Naive thymus-derived CD4-positive, alpha-beta T cell (primary cell): ENCODE measurements at regions of chr12 and their contacts with region 1.

Region 1: DNA sequence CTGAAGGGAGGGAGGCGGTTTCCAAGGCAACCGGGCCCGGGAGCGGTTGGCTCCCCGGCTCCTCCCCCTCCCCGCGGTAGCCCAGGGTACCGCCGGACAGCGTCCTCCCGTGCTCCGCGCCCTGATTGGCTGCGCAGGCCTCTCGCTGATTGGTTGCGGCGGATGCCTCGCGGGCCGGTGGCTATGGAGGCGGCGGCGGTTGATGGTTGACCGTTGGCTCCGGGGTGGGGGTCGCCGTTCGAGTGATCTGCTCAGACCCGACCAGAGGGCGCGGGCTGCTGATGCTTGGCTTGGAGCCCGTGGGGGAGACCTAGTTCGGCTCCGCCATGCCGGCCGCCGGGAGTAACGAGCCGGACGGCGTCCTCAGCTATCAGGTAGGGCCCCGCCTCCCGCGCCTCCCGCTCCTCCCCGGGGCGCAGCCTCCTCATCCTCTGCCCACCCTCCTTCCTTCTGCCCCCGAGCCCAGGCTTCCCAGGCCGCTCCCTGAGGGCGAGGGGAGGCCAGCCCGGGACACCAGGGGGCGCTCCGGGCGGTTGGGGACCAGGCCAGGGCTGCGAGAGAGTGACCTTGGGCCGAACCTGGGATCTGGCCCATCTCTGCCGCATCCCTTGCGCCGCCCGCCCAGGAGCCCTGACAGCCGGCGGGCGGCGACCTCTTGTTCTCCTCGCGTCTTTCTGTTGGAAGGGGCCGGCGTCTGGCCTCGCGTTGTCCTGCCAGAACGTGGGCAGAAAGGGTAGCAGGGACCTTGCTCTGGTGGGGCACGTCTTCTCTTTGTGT is at the start of gene SLC4A8:
- DNase-seq: peak; percentile 22 to 83 (median 51)
- ATAC-seq: peak; percentile 91
- H3K4me3 ChIP-seq: peak within 1 kb of the TSS; percentile 56
- H3K4me3 Mint-ChIP-seq: peak within 1 kb of the TSS; percentile 75 to 90 (median 82)
- H3K27ac ChIP-seq: no peak within 1 kb of the TSS
- H3K27ac Mint-ChIP-seq: peak within 1 kb of the TSS in 8 of 9 donors; percentile 2 to 90 (median 48)
- H3K4me1 ChIP-seq: peaks cover 5% of the 10 kb centered on the region in 2 donors
- H3K4me1 Mint-ChIP-seq: peaks cover 12 to 33% (median 13%) of the 10 kb centered on the region in 7 donors
- H3K27me3 ChIP-seq: no peaks in the 10 kb centered on the region
- H3K27me3 Mint-ChIP-seq: peaks cover 0 to 13% (median 0%) of the 10 kb centered on the region in 5 donors
- total RNA-seq, gene SLC4A8: 0.97 to 8.4 (median 3.4) TPM

Region 2: DNA sequence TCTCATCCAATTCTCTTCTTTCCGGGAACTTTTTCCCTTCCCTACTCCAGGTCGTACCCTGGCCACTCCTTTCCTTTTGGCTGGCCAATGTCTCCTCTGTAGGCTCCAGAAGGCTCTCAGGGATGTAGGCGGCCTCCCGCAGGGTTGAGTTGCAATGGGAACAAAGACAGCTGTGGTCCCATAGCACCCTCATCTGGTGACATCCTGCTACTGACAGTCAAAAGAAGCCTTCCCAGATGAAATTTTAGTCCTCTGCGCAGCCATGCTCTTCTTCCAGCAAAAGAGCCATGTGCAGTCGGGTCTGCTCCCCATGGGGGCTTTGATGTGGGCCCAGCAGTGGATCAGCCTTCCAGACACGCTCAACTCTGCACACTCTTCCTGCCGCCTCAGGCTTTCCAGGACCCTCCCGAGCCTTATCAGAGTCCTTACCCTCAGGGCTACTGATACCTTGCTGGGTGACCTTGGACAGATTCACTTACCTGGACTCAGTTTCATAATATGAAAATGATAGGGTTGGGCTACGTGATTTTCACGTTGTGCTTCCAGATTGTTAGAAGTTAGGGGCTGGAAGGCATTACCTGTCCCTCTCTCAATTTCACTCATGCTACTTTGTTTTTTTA is 72.8 kb before region 1 on chr12:
- CTCF ChIA-PET with region 1: no interaction called
- POLR2A ChIA-PET with region 1: no interaction called
- intact Hi-C with region 1: no loop called
- DNase-seq: peak; percentile 8 to 64 (median 39)
- ATAC-seq: peak; percentile 89
- H3K4me3 ChIP-seq: no peak overlapping the region
- H3K4me3 Mint-ChIP-seq: no peak overlapping the region
- H3K27ac ChIP-seq: no peak overlapping the region
- H3K27ac Mint-ChIP-seq: peak overlapping the region in 4 of 9 donors; percentile 7 to 65 (median 22)
- H3K4me1 ChIP-seq: no peaks in the 10 kb centered on the region
- H3K4me1 Mint-ChIP-seq: peaks cover 0 to 10% (median 5%) of the 10 kb centered on the region in 7 donors
- H3K27me3 ChIP-seq: no peaks in the 10 kb centered on the region
- H3K27me3 Mint-ChIP-seq: peaks cover 0 to 4% (median 0%) of the 10 kb centered on the region in 5 donors

Region 3: GRCh38 chr12:51368640-51369517 is 56.0 kb before region 1 on chr12:
- CTCF ChIA-PET with region 1: no interaction called
- POLR2A ChIA-PET with region 1: no interaction called
- intact Hi-C with region 1: loop called in 1 of 2 experiments (anchors 2 kb)
- DNase-seq: peak; percentile 53 to 96 (median 95)
- ATAC-seq: peak; percentile 96
- H3K4me3 ChIP-seq: peak overlapping the region; percentile 57
- H3K4me3 Mint-ChIP-seq: peak overlapping the region; percentile 62 to 89 (median 80)
- H3K27ac ChIP-seq: peak overlapping the region; percentile 73
- H3K27ac Mint-ChIP-seq: peak overlapping the region; percentile 6 to 96 (median 91)
- H3K4me1 ChIP-seq: peaks cover 24 to 35% of the 10 kb centered on the region in 2 donors
- H3K4me1 Mint-ChIP-seq: peaks cover 38 to 72% (median 54%) of the 10 kb centered on the region in 7 donors
- H3K27me3 ChIP-seq: no peaks in the 10 kb centered on the region
- H3K27me3 Mint-ChIP-seq: peaks cover 0 to 5% (median 0%) of the 10 kb centered on the region in 5 donors

Region 4: GRCh38 chr12:51403681-51404136 is 21.1 kb before region 1 on chr12:
- CTCF ChIA-PET with region 1: no interaction called
- POLR2A ChIA-PET with region 1: no interaction called
- intact Hi-C with region 1: no loop called
- DNase-seq: no peak
- ATAC-seq: peak; percentile 92
- H3K4me3 ChIP-seq: no peak overlapping the region
- H3K4me3 Mint-ChIP-seq: no peak overlapping the region
- H3K27ac ChIP-seq: no peak overlapping the region
- H3K27ac Mint-ChIP-seq: no peak overlapping the region
- H3K4me1 ChIP-seq: peaks cover 0 to 3% of the 10 kb centered on the region in 2 donors
- H3K4me1 Mint-ChIP-seq: peaks cover 3 to 13% (median 7%) of the 10 kb centered on the region in 7 donors
- H3K27me3 ChIP-seq: no peaks in the 10 kb centered on the region
- H3K27me3 Mint-ChIP-seq: peaks cover 0 to 18% (median 0%) of the 10 kb centered on the region in 5 donors

Region 5: DNA sequence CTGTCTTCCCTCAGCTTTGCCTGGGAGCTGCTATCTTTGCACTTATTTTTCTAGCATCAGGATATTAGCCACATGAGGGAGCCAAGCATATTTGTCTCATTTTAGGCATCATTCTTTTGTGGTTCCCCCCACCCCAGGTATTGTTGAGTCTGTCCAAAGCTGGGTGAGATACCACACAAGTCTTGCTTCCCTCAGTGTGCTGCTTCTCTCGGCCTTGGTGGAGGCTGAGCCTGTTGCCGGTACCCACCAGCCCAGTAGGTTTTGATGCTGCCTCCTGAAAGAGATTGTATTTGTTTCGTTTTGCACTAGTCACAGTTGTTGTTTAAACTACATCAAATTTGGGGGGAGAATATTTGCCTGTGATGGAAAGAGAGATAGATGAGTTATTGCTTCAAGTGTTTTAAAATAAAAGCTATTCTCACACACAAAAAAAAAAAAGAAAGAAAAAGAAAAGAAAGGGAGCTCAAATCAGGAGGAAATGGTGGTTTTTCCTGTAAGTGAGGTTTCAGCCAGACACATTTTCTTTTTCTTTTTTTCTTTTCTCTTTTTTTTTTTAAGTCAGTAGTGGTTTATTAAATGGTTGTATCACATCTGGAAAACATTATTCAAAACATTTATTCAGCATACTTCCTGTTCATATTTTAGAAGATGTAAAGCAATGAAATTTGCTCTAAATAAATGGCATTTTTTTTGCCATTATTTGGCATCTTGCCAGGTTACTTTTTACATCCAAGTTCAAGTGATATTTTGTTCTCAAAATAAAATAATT is 58.3 kb after region 1 on chr12:
- CTCF ChIA-PET with region 1: no interaction called
- POLR2A ChIA-PET with region 1: no interaction called
- intact Hi-C with region 1: loop called in 1 of 2 experiments (anchors 1 kb)
- DNase-seq: peak in 8 of 9 donors; percentile 30 to 67 (median 50)
- ATAC-seq: peak; percentile 54
- H3K4me3 ChIP-seq: peak overlapping the region; percentile 28
- H3K4me3 Mint-ChIP-seq: peak overlapping the region; percentile 31 to 88 (median 76)
- H3K27ac ChIP-seq: peak overlapping the region; percentile 42
- H3K27ac Mint-ChIP-seq: peak overlapping the region; percentile 79 to 97 (median 90)
- H3K4me1 ChIP-seq: peaks cover 19 to 32% of the 10 kb centered on the region in 2 donors
- H3K4me1 Mint-ChIP-seq: peaks cover 17 to 54% (median 53%) of the 10 kb centered on the region in 7 donors
- H3K27me3 ChIP-seq: no peaks in the 10 kb centered on the region
- H3K27me3 Mint-ChIP-seq: no peaks in the 10 kb centered on the region

Region 6: GRCh38 chr12:51590347-51591019 is 165.6 kb after region 1 on chr12:
- CTCF ChIA-PET with region 1: no interaction called
- POLR2A ChIA-PET with region 1: no interaction called
- intact Hi-C with region 1: loop called in 1 of 2 experiments (anchors 2 kb)
- DNase-seq: peak; percentile 53 to 84 (median 72)
- ATAC-seq: peak; percentile 95
- H3K4me3 ChIP-seq: peak overlapping the region; percentile 60
- H3K4me3 Mint-ChIP-seq: peak overlapping the region; percentile 78 to 96 (median 86)
- H3K27ac ChIP-seq: no peak overlapping the region
- H3K27ac Mint-ChIP-seq: peak overlapping the region in 4 of 9 donors; percentile 2 to 39 (median 32)
- H3K4me1 ChIP-seq: peaks cover 6 to 9% of the 10 kb centered on the region in 2 donors
- H3K4me1 Mint-ChIP-seq: peaks cover 9 to 24% (median 20%) of the 10 kb centered on the region in 7 donors
- H3K27me3 ChIP-seq: peaks cover 0 to 12% of the 10 kb centered on the region in 2 donors
- H3K27me3 Mint-ChIP-seq: peaks cover 62 to 70% (median 66%) of the 10 kb centered on the region in 5 donors

Region 7: DNA sequence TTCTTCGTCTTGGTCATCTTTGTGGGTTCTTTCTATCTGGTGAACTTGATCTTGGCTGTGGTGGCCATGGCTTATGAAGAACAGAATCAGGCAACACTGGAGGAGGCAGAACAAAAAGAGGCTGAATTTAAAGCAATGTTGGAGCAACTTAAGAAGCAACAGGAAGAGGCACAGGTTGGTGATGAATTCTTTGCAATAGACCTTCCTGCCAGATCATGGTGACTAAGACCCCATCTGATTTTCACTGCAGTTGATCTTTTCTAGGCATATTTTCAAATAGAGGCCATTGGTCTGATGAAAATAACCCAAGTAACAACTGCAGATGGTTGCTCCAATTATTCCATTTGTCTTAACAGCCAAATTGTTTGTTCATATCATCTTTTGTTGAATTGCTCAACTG is 280.6 kb after region 1 on chr12:
- CTCF ChIA-PET with region 1: no interaction called
- POLR2A ChIA-PET with region 1: no interaction called
- intact Hi-C with region 1: no loop called
- DNase-seq: no peak
- ATAC-seq: no peak
- H3K4me3 ChIP-seq: no peak overlapping the region
- H3K4me3 Mint-ChIP-seq: no peak overlapping the region
- H3K27ac ChIP-seq: no peak overlapping the region
- H3K27ac Mint-ChIP-seq: no peak overlapping the region
- H3K4me1 ChIP-seq: no peaks in the 10 kb centered on the region
- H3K4me1 Mint-ChIP-seq: no peaks in the 10 kb centered on the region
- H3K27me3 ChIP-seq: no peaks in the 10 kb centered on the region
- H3K27me3 Mint-ChIP-seq: peaks cover 0 to 5% (median 0%) of the 10 kb centered on the region in 5 donors

Region 8: DNA sequence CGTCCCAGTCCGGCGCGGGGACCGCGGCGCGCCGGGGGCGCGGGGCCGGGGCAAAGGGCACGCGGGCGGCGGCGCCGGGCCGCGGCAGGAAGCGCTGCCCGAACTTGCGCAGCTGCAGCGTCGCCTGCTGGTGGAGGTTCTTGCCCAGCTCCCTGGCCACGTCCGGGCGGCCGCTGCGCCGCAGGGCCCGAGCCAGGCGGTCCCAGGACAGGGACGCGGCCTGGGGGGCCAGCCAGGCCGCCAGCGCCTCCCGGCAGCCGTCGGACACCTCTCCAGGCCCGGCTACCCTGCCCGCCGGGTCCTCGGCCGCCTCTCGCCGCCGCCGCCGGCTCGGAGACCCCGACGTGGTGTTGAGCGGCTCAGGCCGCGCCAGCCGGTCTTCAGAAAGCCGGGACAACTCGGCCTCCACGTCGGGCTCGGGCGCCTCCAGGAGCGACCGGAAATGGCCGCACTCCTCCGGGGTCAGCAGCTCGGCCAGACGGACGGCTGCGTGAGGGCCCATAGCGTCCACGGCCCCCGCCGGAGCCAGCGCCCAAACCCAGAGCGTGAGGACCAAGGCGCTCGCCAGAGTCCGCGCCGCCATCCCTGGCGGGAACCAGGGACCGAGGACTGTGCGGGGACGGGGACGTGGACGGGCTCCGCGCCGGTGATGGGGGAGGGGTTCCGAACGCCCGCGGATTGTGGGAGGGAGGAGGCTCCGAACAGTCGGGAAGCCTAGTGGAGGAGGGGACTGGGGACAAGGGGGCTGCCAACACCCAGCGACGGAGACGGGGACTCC is 389.6 kb after region 1 on chr12:
- CTCF ChIA-PET with region 1: interaction called, 8 read pairs
- POLR2A ChIA-PET with region 1: no interaction called
- intact Hi-C with region 1: loop called (anchors 1 to 2 kb)
- DNase-seq: peak; percentile 22 to 74 (median 61)
- ATAC-seq: peak; percentile 94
- H3K4me3 ChIP-seq: peak overlapping the region; percentile 57
- H3K4me3 Mint-ChIP-seq: peak overlapping the region; percentile 77 to 89 (median 86)
- H3K27ac ChIP-seq: peak overlapping the region; percentile 66
- H3K27ac Mint-ChIP-seq: peak overlapping the region in 6 of 9 donors; percentile 17 to 94 (median 73)
- H3K4me1 ChIP-seq: peaks cover 4 to 7% of the 10 kb centered on the region in 2 donors
- H3K4me1 Mint-ChIP-seq: peaks cover 9 to 19% (median 11%) of the 10 kb centered on the region in 7 donors
- H3K27me3 ChIP-seq: no peaks in the 10 kb centered on the region
- H3K27me3 Mint-ChIP-seq: peaks cover 0 to 48% (median 0%) of the 10 kb centered on the region in 5 donors

Region 9: GRCh38 chr12:51871126-51871525 is 446.3 kb after region 1 on chr12:
- CTCF ChIA-PET with region 1: interaction called, 4 read pairs
- POLR2A ChIA-PET with region 1: no interaction called
- intact Hi-C with region 1: loop called in 1 of 2 experiments (anchors 1 kb)
- DNase-seq: no peak
- ATAC-seq: peak; percentile 71
- H3K4me3 ChIP-seq: no peak overlapping the region
- H3K4me3 Mint-ChIP-seq: no peak overlapping the region
- H3K27ac ChIP-seq: no peak overlapping the region
- H3K27ac Mint-ChIP-seq: no peak overlapping the region
- H3K4me1 ChIP-seq: no peaks in the 10 kb centered on the region
- H3K4me1 Mint-ChIP-seq: peaks cover 6 to 19% (median 15%) of the 10 kb centered on the region in 7 donors
- H3K27me3 ChIP-seq: peaks cover 0 to 16% of the 10 kb centered on the region in 2 donors
- H3K27me3 Mint-ChIP-seq: peaks cover 40 to 49% (median 41%) of the 10 kb centered on the region in 5 donors

Region 10: GRCh38 chr12:51980051-51980808 is 555.4 kb after region 1 on chr12:
- CTCF ChIA-PET with region 1: no interaction called
- POLR2A ChIA-PET with region 1: no interaction called
- intact Hi-C with region 1: loop called (anchors 10 kb)
- DNase-seq: peak; percentile 39 to 76 (median 65)
- ATAC-seq: peak; percentile 99
- H3K4me3 ChIP-seq: no peak overlapping the region
- H3K4me3 Mint-ChIP-seq: peak overlapping the region in 3 of 10 donors; percentile 7 to 45 (median 32)
- H3K27ac ChIP-seq: no peak overlapping the region
- H3K27ac Mint-ChIP-seq: peak overlapping the region in 5 of 9 donors; percentile 25 to 74 (median 48)
- H3K4me1 ChIP-seq: peaks cover 5 to 10% of the 10 kb centered on the region in 2 donors
- H3K4me1 Mint-ChIP-seq: peaks cover 24 to 32% (median 28%) of the 10 kb centered on the region in 7 donors
- H3K27me3 ChIP-seq: no peaks in the 10 kb centered on the region
- H3K27me3 Mint-ChIP-seq: peaks cover 0 to 5% (median 0%) of the 10 kb centered on the region in 5 donors